Caco-2 (cell line): ENCODE measurements at regions of chr12 and their contacts with region 1.

Region 1: DNA sequence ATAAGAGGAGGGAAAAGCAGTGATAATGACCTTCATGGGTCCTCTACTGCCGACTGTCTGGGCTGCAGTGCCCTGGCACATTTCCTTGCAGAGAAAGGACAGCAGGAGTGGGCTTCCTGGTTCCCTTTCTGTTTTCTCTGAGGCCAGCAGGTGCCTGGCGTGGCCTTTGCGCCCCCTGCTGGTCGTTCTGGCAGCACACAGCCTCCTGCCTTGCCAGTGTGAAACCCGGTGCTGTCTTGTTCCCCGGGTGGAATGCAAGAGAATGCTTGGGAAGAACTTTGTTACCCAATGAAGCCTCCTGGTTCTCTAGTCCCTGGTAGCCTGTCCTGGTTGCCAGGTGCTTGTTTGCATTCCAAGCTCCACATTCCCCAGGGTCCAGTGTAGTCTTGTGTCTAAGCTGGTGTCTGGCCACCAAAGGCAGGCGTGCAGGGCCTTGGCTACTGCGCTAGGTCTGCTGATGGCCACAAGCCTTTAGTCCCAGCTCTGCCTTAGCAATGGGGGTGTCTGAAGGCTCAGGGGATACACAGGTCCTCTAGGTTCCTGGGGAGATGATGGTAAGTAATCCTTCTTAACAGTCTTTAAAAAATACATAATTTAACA is 1392.4 kb upstream of the TMEM132C start:
- DNase-seq: peak; percentile 50 to 63
- H3K4me3 ChIP-seq: no peak overlapping the region
- H3K4me3 Mint-ChIP-seq: no peak overlapping the region
- H3K27ac Mint-ChIP-seq: no peak overlapping the region
- H3K4me1 ChIP-seq: no peaks in the 10 kb centered on the region
- H3K4me1 Mint-ChIP-seq: no peaks in the 10 kb centered on the region
- H3K27me3 ChIP-seq: no peaks in the 10 kb centered on the region
- H3K27me3 Mint-ChIP-seq: no peaks in the 10 kb centered on the region
- CTCF ChIP-seq: peak; percentile 61 to 80

Region 2: DNA sequence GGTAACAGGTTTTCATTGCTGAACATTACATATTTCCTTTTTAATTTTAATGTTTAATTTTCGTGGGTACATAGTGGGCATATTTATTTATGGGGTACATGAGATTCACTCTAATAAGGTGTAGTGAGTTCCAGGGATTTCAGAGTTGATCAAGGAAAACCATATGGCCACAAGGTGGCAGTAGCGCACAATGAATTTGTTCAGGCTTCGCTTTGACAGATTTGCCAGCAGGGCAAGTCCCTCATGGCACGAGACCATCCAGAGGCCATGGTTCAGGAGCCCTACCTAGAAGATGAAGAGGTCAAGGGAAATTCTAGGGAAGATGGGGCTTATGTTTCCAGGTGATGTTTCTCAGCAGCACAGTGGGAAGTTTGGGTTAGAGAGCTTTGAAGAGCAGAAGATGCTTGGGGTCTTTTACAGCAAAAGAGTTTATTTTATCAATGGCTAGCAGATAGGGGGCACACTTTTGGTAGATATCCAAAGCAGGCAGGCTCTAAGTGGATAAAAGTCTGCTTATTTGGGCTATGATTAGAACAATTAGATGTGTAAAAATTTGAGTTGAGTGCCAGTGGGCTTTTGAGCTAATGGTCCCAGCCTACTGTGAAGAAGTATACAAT is 804.9 kb before region 1 on chr12:
- CTCF ChIA-PET with region 1: no interaction called
- POLR2A ChIA-PET with region 1: no interaction called
- intact Hi-C with region 1: loop called (anchors 1 kb)
- DNase-seq: peak; percentile 60 to 66
- H3K4me3 ChIP-seq: no peak overlapping the region
- H3K4me3 Mint-ChIP-seq: no peak overlapping the region
- H3K27ac Mint-ChIP-seq: no peak overlapping the region
- H3K4me1 ChIP-seq: no peaks in the 10 kb centered on the region
- H3K4me1 Mint-ChIP-seq: no peaks in the 10 kb centered on the region
- H3K27me3 ChIP-seq: no peaks in the 10 kb centered on the region
- H3K27me3 Mint-ChIP-seq: no peaks in the 10 kb centered on the region
- CTCF ChIP-seq: peak; percentile 53 to 69

Region 3: DNA sequence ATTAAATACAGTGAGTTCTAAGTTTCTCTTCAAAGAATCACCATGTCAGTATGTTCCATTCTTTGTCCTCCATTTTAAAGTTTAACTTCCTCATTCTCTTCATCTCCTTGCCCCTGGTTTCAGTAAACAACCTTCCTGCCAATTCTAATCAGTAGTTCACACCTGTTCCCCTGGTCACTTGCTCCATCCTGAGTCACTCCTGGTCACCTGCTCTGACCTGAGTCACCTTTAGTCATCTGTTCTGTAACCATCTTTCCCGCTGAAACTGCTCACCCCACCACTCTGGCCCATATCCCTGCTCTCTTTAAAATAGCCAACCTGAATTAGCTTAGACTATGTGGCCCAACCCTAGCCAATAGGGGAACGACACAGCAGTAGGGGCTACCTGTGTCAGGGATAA is 55.0 kb before region 1 on chr12:
- CTCF ChIA-PET with region 1: no interaction called
- POLR2A ChIA-PET with region 1: no interaction called
- intact Hi-C with region 1: no loop called
- DNase-seq: no peak
- H3K4me3 ChIP-seq: no peak overlapping the region
- H3K4me3 Mint-ChIP-seq: no peak overlapping the region
- H3K27ac Mint-ChIP-seq: no peak overlapping the region
- H3K4me1 ChIP-seq: no peaks in the 10 kb centered on the region
- H3K4me1 Mint-ChIP-seq: no peaks in the 10 kb centered on the region
- H3K27me3 ChIP-seq: no peaks in the 10 kb centered on the region
- H3K27me3 Mint-ChIP-seq: no peaks in the 10 kb centered on the region
- CTCF ChIP-seq: no peak